ENCODE measurements at regions of chr10 and their contacts with region 1.

Region 1: DNA sequence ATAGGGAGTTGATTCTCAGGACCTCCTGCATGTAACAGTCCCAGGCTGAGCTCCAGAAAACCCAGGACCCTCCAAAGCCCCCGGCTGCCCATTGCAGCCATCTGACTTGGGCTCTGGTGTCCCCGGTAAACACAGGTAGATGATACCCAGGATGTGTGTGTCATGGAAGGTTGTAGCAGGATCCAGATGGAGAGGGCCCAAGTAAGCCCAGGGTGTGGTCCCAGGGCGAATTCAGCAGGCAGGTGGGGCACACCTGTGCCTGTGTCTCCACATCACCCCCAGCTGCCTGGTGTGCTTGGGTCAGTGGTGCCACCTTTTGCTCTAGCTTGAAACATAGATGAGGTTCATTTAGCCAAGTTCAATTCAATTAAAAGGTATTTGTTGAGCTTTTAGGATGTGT is 524.1 kb downstream of the GLRX3 start:
- DNase-seq: no peak
- ATAC-seq: no peak

Region 2: DNA sequence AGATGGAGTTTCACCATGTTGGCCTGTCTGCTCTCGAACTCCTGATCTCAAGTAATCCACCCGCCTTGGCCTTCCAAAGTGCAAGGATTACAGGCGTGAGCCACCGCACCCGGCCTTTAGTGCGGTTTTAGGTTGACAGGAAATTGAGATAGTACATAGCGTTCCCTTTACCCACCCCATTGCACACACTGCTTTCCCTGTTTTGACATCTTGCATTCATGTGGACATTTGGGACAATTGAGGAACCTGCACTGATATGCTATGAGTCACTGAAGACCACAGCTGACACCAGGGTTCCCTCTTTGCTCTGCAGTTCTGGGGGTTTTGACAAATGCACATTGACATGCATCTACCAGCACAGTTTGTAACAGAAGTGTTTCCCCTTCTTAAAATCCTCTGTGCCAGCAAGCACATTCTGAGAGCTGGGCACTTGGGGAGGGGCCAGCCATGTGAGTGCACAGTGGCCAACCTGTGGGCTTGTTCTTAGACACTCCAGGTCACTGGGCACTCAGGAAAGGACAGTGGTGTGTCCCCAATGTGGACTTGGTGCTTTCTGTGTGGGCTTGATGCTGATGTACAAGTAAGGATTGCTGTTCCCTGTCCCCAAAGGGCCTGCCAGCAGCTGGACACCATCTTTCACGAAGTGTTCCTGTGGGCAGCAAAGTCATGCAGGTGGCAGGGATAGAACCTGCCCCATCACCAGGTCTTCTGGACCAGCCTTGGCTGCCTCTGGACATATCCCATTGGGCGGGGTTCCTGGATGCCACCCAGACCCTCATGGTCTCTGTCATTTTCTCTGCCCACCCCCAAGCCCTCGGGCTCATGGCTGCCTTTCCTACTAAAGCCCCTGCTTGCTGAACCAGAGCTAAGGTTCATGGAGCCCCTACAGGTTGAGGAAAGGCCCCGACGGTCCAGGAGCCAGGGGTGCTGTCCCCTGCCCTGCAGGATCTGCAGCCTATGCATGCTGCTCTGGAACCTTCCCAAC is 55.7 kb after region 1 on chr10:
- intact Hi-C with region 1: loop called (anchors 2 kb)
- DNase-seq: no peak
- ATAC-seq: no peak